Ascending aorta (tissue), 2 donors: ENCODE measurements at regions of chr4 and their contacts with region 1.

Region 1: DNA sequence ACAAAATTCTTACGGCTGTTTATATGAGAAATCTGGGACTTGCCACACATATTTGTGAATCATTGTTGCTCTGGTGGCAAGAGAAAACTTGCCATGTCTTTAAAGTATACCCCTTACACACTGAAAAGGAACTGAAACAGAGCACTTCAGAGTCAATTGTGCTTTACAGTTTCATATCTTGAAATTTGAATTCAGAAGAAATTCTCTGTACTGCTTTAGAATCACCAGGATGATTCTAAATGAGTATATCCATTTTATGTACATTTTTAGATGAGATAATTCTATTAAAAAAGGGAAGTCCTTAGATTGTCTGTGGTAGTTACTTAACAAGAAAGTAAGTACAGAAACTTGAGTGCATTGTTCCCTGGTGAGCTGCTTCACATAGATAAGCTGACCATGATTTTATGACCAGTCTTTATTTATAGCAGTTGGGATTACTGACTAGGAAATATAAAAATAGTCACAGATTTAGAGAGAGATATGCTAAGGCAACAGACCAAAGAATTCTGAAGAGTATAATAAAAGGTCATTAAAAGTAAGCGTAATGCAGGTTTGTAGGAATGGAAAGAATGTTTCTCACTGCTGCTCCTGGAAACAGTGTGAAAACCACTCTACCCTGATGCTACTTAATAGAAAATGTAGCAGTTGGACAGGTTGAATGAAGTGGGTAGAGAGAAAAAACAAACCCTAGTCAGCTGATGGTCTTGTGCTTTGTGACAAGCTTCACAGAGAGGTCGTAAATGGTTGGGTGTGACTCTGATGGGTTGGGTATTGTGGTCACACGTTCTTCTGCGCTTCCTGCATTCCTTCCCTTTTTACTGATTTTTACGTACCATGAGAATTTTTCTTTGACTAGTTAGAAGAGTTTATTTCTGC is 41.0 kb downstream of the FNIP2 start:
- DNase-seq: no peak
- H3K4me3 ChIP-seq: peak overlapping the region in 1 of 2 donors; percentile 39
- H3K27ac ChIP-seq: peak overlapping the region; percentile 77 to 94
- H3K4me1 ChIP-seq: peaks cover 5 to 40% of the 10 kb centered on the region in 2 donors
- H3K27me3 ChIP-seq: no peaks in the 10 kb centered on the region
- CTCF ChIP-seq: peak in 1 of 3 experiments; percentile 3

Region 2: DNA sequence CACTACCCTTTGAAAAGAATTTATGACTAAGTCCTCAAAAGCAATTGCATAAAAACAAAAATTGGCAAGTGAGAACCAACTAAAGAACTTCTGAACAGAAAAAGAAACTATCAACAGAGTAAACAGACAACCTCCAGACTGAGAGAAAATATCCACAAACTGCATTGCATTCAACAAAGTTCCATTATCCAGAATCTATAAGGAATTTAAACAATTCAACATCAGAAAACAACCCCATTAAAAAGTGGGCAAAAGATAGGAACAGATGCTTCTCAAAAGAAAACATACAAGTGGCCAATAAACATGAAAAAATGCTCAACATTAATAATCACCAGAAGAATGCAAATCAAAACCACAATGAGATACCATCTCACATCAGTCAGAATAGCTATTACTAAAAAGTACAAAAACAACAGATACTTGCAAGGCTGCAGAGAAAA is 767.2 kb before region 1 on chr4:
- intact Hi-C with region 1: no loop called
- DNase-seq: no peak
- H3K4me3 ChIP-seq: no peak overlapping the region
- H3K27ac ChIP-seq: no peak overlapping the region
- H3K4me1 ChIP-seq: no peaks in the 10 kb centered on the region
- H3K27me3 ChIP-seq: no peaks in the 10 kb centered on the region
- CTCF ChIP-seq: no peak

Region 3: DNA sequence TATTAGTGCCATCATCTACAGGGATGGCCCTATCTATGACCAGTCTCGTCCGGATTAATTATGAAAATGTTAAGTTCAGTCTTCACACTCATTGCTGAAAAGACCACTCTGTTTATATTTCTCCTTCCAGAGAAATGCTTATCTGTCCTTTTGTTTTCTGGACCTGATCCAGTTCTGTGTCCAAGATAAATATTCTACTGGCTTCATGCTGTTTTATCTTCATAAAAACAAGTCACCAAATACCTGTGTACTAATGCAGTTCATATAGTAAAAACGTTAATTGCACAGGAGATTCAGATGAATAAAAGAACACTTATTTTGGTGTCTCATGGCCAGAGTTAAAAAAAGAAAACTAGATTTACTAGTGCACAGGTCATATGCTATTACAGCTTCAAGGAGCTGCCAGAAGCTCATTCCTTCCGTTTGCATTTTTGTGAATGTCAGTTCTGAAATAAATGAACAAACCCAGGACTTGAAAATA is 23.7 kb before region 1 on chr4:
- intact Hi-C with region 1: loop called (anchors 2 kb)
- DNase-seq: no peak
- H3K4me3 ChIP-seq: peak overlapping the region; percentile 4 to 46
- H3K27ac ChIP-seq: peak overlapping the region; percentile 46 to 78
- H3K4me1 ChIP-seq: peaks cover 8 to 68% of the 10 kb centered on the region in 2 donors
- H3K27me3 ChIP-seq: no peaks in the 10 kb centered on the region
- CTCF ChIP-seq: no peak

Region 4: DNA sequence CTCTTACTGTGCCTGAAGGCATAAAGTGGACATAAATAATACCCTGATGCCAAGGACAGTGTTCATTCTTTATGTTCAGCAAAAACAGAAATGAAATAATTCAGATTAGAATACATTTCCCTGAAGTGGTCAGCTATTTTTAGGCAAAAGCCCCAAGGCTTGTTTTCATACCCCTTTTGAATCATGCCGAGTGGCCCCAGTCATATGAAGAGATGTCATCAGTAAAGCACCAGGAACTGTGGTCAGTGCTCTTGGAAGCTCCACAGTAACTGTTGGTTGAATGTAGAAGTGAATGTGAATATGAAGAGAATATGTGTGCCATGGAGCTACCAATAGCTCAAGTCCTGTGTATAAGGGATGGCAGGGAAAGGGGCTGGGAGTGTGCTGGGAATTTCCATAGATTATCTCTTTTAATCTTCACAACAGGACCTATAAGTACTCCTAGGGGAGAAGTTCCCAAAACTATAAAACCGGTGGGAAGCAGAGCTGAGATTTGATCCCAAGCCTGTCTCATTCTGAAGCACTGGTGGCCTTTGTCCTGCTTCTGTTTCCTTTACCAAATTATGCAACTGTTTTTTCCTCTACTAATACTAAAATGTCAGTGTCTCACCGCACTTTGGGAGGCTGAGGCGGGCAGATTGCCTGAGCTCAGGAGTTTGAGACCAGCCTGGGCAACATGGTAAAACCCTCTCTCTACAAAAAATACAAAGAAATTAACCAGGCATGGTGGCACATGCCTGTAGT is 11.6 kb after region 1 on chr4:
- intact Hi-C with region 1: loop called (anchors 1 kb)
- DNase-seq: peak in 1 of 2 donors; percentile 36
- H3K4me3 ChIP-seq: no peak overlapping the region
- H3K27ac ChIP-seq: peak overlapping the region; percentile 76 to 87
- H3K4me1 ChIP-seq: peaks cover 25 to 64% of the 10 kb centered on the region in 2 donors
- H3K27me3 ChIP-seq: no peaks in the 10 kb centered on the region
- CTCF ChIP-seq: no peak